ENCODE measurements at regions of chr15 and their contacts with region 1.

Region 1: GRCh38 chr15:52208306-52208946 is 17.2 kb upstream of the GNB5 start:
- DNase-seq: no peak
- H3K4me3 ChIP-seq: no peak overlapping the region
- CTCF ChIP-seq: peak; percentile 79

Region 2: DNA sequence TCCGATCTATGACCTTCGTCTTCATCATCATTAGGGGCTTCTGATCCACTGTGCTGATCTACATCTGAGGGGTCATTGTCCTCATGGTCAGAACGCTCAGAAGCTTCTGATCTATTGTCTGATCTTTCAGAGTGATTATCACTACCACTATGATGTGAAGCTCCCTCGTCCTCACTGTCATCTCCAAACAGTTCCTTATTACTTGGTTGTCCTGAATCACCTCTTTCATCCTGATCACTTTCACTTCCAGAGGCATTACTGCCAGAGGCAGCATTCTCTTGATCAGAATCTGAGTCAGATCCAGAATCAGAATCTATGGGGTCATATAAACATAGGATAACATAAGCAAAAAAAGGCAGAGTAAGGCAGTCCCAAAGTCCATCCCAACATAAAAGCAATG is 242.2 kb before region 1 on chr15:
- CTCF ChIA-PET with region 1: interaction called, 11 read pairs
- POLR2A ChIA-PET with region 1: no interaction called
- DNase-seq: no peak
- H3K4me3 ChIP-seq: no peak overlapping the region
- CTCF ChIP-seq: no peak

Region 3: DNA sequence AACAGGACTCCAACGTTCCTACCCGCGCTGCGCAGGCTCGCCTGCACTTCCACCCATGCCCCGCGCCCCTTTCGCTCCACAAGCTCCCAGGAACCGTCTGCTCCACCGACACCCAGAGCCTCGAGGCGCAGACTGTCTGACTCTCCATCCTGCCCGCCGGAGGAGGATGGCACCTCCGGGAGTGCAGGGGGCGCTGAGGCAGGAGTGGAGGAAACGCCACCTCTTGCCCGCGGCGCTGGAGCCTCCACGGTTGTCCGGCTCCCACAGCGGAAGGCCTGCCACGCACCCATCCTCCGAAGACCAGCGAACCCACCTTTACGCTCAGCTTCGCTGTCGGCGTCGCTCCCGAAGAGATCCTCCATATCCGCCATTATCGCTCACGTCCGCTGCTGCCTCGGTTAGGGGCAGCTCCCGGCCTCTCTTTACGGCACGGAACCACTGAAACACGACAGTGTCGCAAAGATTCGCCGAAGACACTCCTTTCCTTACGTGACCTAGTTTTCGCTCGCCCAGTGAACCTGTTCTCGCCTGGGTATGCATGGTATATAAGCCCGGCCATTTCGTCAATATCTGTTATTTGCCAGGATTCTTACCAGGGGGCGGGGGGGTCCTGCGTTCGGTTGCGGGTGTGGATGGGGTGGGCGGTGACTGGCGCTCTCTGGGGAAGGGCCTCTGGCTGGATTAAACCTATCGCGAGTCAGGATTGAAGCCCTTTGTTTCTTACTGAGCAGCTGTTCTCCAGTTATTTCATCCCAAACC is 236.9 kb before region 1 on chr15 and contains the start of gene LEO1:
- CTCF ChIA-PET with region 1: interaction called, 11 read pairs
- POLR2A ChIA-PET with region 1: no interaction called
- DNase-seq: peak; percentile 93
- H3K4me3 ChIP-seq: peak within 1 kb of the TSS; percentile 91
- CTCF ChIP-seq: peak; percentile 55

Region 4: DNA sequence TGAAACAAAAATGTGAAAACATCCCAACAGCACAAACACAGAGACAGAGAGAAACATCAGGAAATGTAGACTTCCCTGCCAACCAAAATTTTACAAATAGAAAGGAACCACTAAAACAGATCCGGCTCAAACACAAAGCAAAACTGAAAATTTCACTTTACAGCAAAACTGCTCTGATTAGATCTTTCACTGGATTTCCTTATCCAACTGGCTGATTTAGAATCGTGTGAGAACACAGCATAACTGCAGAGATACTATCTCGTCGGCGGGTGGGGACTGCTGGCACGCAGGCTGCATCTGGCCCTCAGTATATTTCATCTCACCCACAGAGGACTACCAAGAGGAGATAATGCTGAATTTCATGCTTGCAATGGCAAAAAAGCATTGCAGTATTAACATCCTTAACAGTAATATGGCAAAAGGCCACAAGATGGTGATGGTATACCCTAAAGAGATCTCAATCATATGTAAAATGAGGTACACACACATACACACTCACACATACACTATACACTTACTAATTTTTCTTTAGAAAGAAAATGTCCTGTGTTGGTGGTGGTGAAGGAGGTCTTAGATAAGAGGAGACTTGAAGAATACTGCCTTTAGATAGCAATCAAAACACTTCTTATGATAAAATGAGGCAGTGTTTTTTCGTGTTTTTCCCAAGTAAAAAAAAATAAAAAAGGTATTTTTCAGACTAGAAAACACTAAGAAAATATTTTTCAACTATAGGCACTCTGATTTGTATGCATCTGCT is 226.2 kb before region 1 on chr15:
- CTCF ChIA-PET with region 1: interaction called, 24 read pairs
- POLR2A ChIA-PET with region 1: interaction called, 3 read pairs
- DNase-seq: no peak
- H3K4me3 ChIP-seq: peak overlapping the region; percentile 18
- CTCF ChIP-seq: peak; percentile 39

Region 5: GRCh38 chr15:52139599-52140491 is 68.6 kb before region 1 on chr15:
- CTCF ChIA-PET with region 1: interaction called, 12 read pairs
- POLR2A ChIA-PET with region 1: no interaction called
- DNase-seq: no peak
- H3K4me3 ChIP-seq: no peak overlapping the region
- CTCF ChIP-seq: peak; percentile 73

Region 6: DNA sequence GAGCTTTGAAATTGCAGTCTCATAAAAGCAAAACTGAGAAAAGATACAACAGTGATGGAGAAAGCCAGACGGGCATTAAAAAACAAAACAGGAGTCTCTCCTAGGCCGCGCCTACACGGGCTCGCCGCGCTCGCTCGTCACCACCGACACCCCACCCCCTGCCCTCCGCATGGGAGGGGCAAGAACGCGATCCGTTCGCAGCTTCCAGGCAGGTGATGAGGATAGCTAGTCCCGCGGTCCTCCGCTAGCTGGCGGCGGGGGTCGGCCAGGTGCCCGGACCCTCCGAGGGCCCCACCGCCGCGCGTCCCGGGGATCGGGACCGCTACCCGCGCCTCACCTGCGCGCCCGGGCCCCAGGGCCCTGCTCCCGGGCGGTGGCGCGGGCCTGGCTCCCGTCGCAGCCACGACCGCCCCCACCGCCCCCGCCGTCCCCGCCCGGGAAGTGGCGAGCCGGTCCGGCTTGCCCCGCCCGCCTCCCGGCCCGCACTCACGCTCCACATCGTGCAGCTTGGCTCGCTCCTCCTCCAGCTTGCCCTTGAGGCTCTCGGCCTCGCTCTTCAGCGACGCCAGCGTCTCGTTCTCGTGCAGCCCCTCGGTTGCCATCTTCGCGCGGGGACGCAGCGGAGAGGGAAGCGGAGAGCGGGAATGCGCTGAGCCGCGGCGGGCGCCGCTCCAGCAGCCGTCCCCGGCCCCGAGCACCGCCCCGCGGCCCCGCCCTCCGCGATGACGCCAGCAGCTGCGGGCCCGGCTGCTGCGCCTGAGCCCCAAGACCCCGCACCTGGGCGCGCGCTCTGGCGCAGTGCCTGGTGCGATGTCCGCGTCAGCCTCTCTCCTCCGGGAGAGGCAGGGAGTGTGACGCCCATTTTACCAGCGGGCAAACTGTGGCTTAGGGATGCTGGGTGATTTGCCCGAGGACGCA is 28.9 kb before region 1 on chr15:
- CTCF ChIA-PET with region 1: interaction called, 52 read pairs
- POLR2A ChIA-PET with region 1: no interaction called
- DNase-seq: no peak
- H3K4me3 ChIP-seq: peak overlapping the region; percentile 92
- CTCF ChIP-seq: no peak

Region 7: DNA sequence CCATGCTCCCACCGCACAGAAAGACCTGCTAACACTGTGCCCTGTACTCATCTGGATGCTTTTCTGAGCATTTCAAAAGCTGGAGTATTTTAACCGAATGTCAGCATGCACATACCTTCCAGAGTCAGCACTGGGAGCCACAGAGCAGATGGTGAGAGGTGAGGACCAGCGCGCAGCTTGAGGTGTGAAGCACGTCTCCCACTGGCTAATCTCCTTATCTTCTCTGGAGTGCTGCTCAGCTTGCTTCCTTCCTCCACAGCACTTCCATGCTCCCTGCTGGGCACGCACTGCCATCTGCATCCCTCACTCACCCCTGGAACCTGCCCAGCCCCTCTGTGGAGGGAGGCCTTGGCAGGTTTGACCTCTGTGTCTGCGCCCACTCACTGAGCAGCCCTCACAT is 17.2 kb before region 1 on chr15 and contains the start of gene GNB5:
- CTCF ChIA-PET with region 1: interaction called, 52 read pairs
- POLR2A ChIA-PET with region 1: no interaction called
- DNase-seq: no peak
- H3K4me3 ChIP-seq: no peak within 1 kb of the TSS
- CTCF ChIP-seq: no peak